PC-3 (cell line): ENCODE measurements at regions of chr17 and their contacts with region 1.

Region 1: GRCh38 chr17:41907185-41907556 is 11.6 kb downstream of the ACLY start:
- DNase-seq: peak; percentile 39
- ATAC-seq: peak; percentile 35
- H3K4me3 ChIP-seq: no peak overlapping the region
- H3K27ac ChIP-seq: peak overlapping the region; percentile 29; the same call in 1 of the 2 replicates
- H3K4me1 ChIP-seq: peaks cover 30% of the 10 kb centered on the region
- H3K27me3 ChIP-seq: no peaks in the 10 kb centered on the region
- CTCF ChIP-seq: no peak

Region 2: GRCh38 chr17:41917679-41918313 is 10.6 kb after region 1 on chr17:
- CTCF ChIA-PET with region 1: no interaction called
- POLR2A ChIA-PET with region 1: interaction called, 14 read pairs
- intact Hi-C with region 1: no loop called
- DNase-seq: peak; percentile 33
- ATAC-seq: no peak
- H3K4me3 ChIP-seq: peak overlapping the region; percentile 93
- H3K27ac ChIP-seq: peak overlapping the region; percentile 39
- H3K4me1 ChIP-seq: peaks cover 34% of the 10 kb centered on the region
- H3K27me3 ChIP-seq: no peaks in the 10 kb centered on the region
- CTCF ChIP-seq: no peak